CD8-positive, alpha-beta T cell (primary cell): ENCODE measurements at regions of chr2 and their contacts with region 1.

Region 1: GRCh38 chr2:170822290-170823087 is 5.8 kb downstream of the GAD1 start:
- DNase-seq: peak in 4 of 9 experiments; percentile 23 to 59 (median 42)
- ATAC-seq: no peak
- H3K4me3 ChIP-seq: peak overlapping the region; percentile 42 to 53
- H3K4me3 Mint-ChIP-seq: peak overlapping the region; percentile 72
- H3K27ac ChIP-seq: no peak overlapping the region
- H3K27ac Mint-ChIP-seq: no peak overlapping the region
- H3K4me1 ChIP-seq: peaks cover 51% of the 10 kb centered on the region
- H3K4me1 Mint-ChIP-seq: peaks cover 40% of the 10 kb centered on the region
- H3K27me3 ChIP-seq: peaks cover 40 to 51% of the 10 kb centered on the region in 2 experiments
- H3K27me3 Mint-ChIP-seq: peaks cover 74% of the 10 kb centered on the region
- CTCF ChIP-seq: peak; percentile 13

Region 2: GRCh38 chr2:170843656-170844055 is 21.2 kb after region 1 on chr2:
- CTCF ChIA-PET with region 1: no interaction called
- POLR2A ChIA-PET with region 1: no interaction called
- intact Hi-C with region 1: loop called in 1 of 2 experiments (anchors 1 kb)
- DNase-seq: peak in 2 of 9 experiments; percentile 25 to 40
- ATAC-seq: no peak
- H3K4me3 ChIP-seq: no peak overlapping the region
- H3K4me3 Mint-ChIP-seq: no peak overlapping the region
- H3K27ac ChIP-seq: no peak overlapping the region
- H3K27ac Mint-ChIP-seq: no peak overlapping the region
- H3K4me1 ChIP-seq: peaks cover 10% of the 10 kb centered on the region
- H3K4me1 Mint-ChIP-seq: peaks cover 14% of the 10 kb centered on the region
- H3K27me3 ChIP-seq: no peaks in the 10 kb centered on the region
- H3K27me3 Mint-ChIP-seq: peaks cover 7% of the 10 kb centered on the region
- CTCF ChIP-seq: no peak

Region 3: DNA sequence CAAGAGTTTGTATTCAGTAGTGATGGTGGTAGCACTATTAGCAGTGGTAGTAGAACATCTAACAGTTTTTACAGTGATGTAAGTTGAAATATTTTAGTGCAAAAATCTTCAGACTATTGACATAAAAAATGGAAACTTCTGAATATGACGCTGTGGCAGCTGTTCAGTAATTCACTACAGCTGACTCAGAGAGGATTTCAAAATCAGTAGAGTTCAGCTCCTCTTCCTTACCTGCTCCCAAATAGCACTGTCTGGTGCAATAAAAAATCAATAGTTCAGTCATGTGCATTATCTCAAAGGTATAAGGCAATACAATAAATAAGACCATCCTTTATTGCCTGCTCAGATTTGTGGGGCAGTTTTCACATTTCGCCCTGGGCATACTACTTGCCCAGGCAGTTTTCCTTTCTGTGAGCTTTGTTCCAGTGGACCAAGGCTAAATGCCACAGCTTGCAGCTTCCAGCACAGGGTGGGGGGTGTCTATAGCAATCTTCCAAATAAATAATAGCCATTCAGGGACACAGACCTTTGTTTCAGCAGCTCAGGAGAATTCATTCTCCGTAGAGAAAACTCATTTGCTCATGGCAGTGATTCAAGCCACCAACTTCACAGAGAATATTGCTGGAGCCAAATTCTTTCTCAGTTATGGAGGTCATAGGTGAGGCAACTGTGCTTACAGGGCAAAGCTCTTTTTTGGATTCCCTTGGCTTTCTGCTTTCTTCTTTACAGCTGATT is 72.7 kb after region 1 on chr2:
- CTCF ChIA-PET with region 1: no interaction called
- POLR2A ChIA-PET with region 1: no interaction called
- intact Hi-C with region 1: no loop called
- DNase-seq: no peak
- ATAC-seq: no peak
- H3K4me3 ChIP-seq: no peak overlapping the region
- H3K4me3 Mint-ChIP-seq: no peak overlapping the region
- H3K27ac ChIP-seq: no peak overlapping the region
- H3K27ac Mint-ChIP-seq: no peak overlapping the region
- H3K4me1 ChIP-seq: no peaks in the 10 kb centered on the region
- H3K4me1 Mint-ChIP-seq: no peaks in the 10 kb centered on the region
- H3K27me3 ChIP-seq: no peaks in the 10 kb centered on the region
- H3K27me3 Mint-ChIP-seq: peaks cover 7% of the 10 kb centered on the region
- CTCF ChIP-seq: no peak